B cell (primary cell): ENCODE measurements at regions of chr9 and their contacts with region 1.

Region 1: DNA sequence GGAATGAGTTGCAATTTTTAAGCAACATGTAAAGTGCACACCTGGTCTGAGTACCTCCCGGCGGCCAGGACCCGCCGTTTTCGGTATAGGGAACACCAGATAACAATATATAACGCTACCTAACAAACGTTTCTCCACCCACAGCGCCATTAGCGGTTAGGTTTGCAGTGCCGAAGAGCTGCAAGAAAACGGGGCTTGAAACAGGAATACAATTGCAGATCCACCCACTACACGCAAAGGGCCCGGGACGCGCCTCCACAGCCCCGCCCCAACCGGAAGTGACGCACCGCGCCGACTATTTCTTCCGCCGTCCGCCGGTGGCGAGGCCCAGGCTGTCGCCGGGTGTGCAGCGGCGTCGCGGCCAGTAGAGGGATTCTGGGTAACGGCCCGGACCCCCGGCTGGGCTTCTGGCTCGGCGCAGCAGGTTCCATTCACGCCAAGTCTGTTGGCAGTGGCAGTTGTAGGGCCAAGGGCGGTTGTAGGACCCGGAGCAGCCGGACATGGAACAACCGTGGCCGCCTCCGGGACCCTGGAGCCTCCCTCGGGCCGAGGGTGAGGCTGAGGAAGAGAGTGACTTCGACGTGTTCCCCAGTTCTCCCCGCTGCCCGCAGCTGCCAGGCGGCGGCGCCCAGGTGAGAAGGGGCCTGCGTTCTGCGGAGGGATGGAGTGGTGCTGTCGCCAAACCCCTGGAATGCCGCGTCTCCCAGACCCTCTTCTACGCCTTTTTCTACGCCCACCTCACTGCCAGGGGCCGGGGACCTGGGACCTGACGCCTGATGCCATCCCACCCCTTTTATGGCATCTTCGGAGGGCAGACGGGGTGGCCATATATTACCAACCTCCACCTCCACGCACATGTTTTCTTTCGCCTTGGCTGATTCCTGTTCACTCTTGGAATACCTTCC is at the start of gene CDC37L1:
- DNase-seq: peak; percentile 98
- ATAC-seq: peak; percentile 95
- H3K4me3 ChIP-seq: peak within 1 kb of the TSS; percentile 58 to 97 (median 72)
- H3K4me3 Mint-ChIP-seq: no peak within 1 kb of the TSS
- H3K27ac ChIP-seq: peak within 1 kb of the TSS; percentile 89 to 93
- H3K27ac Mint-ChIP-seq: no peak within 1 kb of the TSS
- H3K4me1 ChIP-seq: peaks cover 17 to 20% of the 10 kb centered on the region in 2 donors
- H3K4me1 Mint-ChIP-seq: peaks cover 3% of the 10 kb centered on the region
- H3K27me3 ChIP-seq: no peaks in the 10 kb centered on the region
- H3K27me3 Mint-ChIP-seq: no peaks in the 10 kb centered on the region
- CTCF ChIP-seq: peak; percentile 72
- total RNA-seq, gene CDC37L1: 16.0 and 19.3 TPM in 2 replicates

Region 2: GRCh38 chr9:4662108-4662988 is 17.2 kb before region 1 on chr9 and contains the start of gene PLPP6:
- CTCF ChIA-PET with region 1: interaction called, 6 read pairs
- POLR2A ChIA-PET with region 1: interaction called, 3 read pairs
- intact Hi-C with region 1: loop called (anchors 1 kb)
- DNase-seq: peak; percentile 86
- ATAC-seq: peak; percentile 85
- H3K4me3 ChIP-seq: peak within 1 kb of the TSS; percentile 39 to 92 (median 74)
- H3K4me3 Mint-ChIP-seq: peak within 1 kb of the TSS; percentile 96
- H3K27ac ChIP-seq: peak within 1 kb of the TSS; percentile 42 to 57
- H3K27ac Mint-ChIP-seq: peak within 1 kb of the TSS; percentile 91
- H3K4me1 ChIP-seq: peaks cover 48 to 50% of the 10 kb centered on the region in 2 donors
- H3K4me1 Mint-ChIP-seq: peaks cover 46% of the 10 kb centered on the region
- H3K27me3 ChIP-seq: peaks cover 0 to 5% (median under 1%) of the 10 kb centered on the region in 4 experiments
- H3K27me3 Mint-ChIP-seq: peaks cover 12% of the 10 kb centered on the region
- CTCF ChIP-seq: peak; percentile 51
- total RNA-seq, gene PLPP6: 12.8 and 14.3 TPM in 2 replicates

Region 3: DNA sequence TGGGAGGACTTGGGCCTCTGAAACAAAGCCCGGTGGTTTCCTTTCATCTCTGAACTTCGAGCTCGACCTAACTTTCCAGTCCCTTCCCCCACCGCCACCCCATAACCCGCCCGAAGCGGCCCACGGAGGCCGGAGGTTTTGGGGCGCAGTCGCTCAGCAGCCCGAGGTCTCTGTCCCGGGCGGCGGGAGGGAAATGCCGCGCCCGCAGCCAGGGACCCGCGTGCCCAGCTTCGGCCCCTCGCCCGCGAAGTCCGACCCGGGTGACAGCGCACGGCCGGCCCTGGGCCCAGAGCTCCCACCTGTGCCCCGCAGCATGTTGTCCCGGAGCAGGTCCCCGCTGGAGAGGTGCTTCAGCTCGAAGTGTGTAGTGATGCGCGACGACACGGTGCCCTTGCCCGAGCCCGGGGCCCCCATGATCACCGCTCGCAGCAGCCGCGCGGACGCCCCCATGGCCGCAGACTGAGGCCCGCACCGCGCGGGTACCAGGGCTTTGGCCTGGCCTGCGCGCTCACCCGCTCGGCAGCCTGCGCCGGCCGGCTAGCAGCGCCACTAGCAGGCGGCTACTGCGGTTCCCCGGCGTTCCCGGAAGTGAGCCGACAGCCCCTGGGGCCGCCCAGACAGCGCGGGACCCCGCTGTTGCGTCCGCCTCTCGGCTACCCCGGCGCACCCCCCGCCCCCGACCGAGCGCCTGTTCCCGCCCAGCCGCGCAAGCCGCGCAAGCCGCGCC is 61.3 kb after region 1 on chr9 and contains the start of gene AK3:
- CTCF ChIA-PET with region 1: interaction called, 6 read pairs
- POLR2A ChIA-PET with region 1: interaction called, 20 read pairs
- intact Hi-C with region 1: loop called (anchors 1 kb)
- DNase-seq: peak; percentile 92
- ATAC-seq: peak; percentile 92
- H3K4me3 ChIP-seq: peak within 1 kb of the TSS; percentile 73 to 90 (median 85)
- H3K4me3 Mint-ChIP-seq: peak within 1 kb of the TSS; percentile 89
- H3K27ac ChIP-seq: peak within 1 kb of the TSS; percentile 51 to 83
- H3K27ac Mint-ChIP-seq: peak within 1 kb of the TSS; percentile 90
- H3K4me1 ChIP-seq: peaks cover 19 to 23% of the 10 kb centered on the region in 2 donors
- H3K4me1 Mint-ChIP-seq: peaks cover 27% of the 10 kb centered on the region
- H3K27me3 ChIP-seq: no peaks in the 10 kb centered on the region
- H3K27me3 Mint-ChIP-seq: no peaks in the 10 kb centered on the region
- CTCF ChIP-seq: no peak
- total RNA-seq, gene AK3: 20.4 and 22.9 TPM in 2 replicates

Region 4: GRCh38 chr9:5832543-5833529 is 1153.3 kb after region 1 on chr9 and contains the start of gene ERMP1:
- CTCF ChIA-PET with region 1: no interaction called
- POLR2A ChIA-PET with region 1: no interaction called
- intact Hi-C with region 1: loop called (anchors 2 kb)
- DNase-seq: peak; percentile 93
- ATAC-seq: peak; percentile 89
- H3K4me3 ChIP-seq: peak within 1 kb of the TSS; percentile 63 to 83 (median 75)
- H3K4me3 Mint-ChIP-seq: peak within 1 kb of the TSS; percentile 95
- H3K27ac ChIP-seq: peak within 1 kb of the TSS in 1 of 2 donors; percentile 50
- H3K27ac Mint-ChIP-seq: peak within 1 kb of the TSS; percentile 93
- H3K4me1 ChIP-seq: peaks cover 19 to 25% of the 10 kb centered on the region in 2 donors
- H3K4me1 Mint-ChIP-seq: peaks cover 37% of the 10 kb centered on the region
- H3K27me3 ChIP-seq: no peaks in the 10 kb centered on the region
- H3K27me3 Mint-ChIP-seq: no peaks in the 10 kb centered on the region
- CTCF ChIP-seq: peak; percentile 96
- total RNA-seq, gene ERMP1: 10.6 and 12.8 TPM in 2 replicates